Ascending aorta (tissue), 2 donors: ENCODE measurements at regions of chr2 and their contacts with region 1.

Region 1: GRCh38 chr2:118855451-118856279 is 8.2 kb upstream of the EN1 start:
- DNase-seq: peak; percentile 25 to 81
- H3K4me3 ChIP-seq: peak overlapping the region; percentile 39 to 44
- H3K27ac ChIP-seq: no peak overlapping the region
- H3K4me1 ChIP-seq: peaks cover 0 to 17% of the 10 kb centered on the region in 2 donors
- H3K27me3 ChIP-seq: peaks cover 34% of the 10 kb centered on the region
- CTCF ChIP-seq: peak; percentile 81 to 97 (median 84)

Region 2: GRCh38 chr2:118046634-118047210 is 808.9 kb before region 1 on chr2:
- intact Hi-C with region 1: loop called (anchors 2 kb)
- DNase-seq: no peak
- H3K4me3 ChIP-seq: no peak overlapping the region
- H3K27ac ChIP-seq: no peak overlapping the region
- H3K4me1 ChIP-seq: no peaks in the 10 kb centered on the region
- H3K27me3 ChIP-seq: no peaks in the 10 kb centered on the region
- CTCF ChIP-seq: peak in 2 of 3 experiments; percentile 57 to 67

Region 3: GRCh38 chr2:118088051-118089024 is 767.3 kb before region 1 on chr2 and contains the start of gene INSIG2:
- intact Hi-C with region 1: no loop called
- DNase-seq: peak; percentile 77 to 95
- H3K4me3 ChIP-seq: peak within 1 kb of the TSS; percentile 79 to 90
- H3K27ac ChIP-seq: peak within 1 kb of the TSS; percentile 48 to 69
- H3K4me1 ChIP-seq: peaks cover 0 to 23% of the 10 kb centered on the region in 2 donors
- H3K27me3 ChIP-seq: no peaks in the 10 kb centered on the region
- CTCF ChIP-seq: peak in 1 of 3 experiments; percentile 14
- total RNA-seq, gene INSIG2: 64.2 TPM

Region 4: DNA sequence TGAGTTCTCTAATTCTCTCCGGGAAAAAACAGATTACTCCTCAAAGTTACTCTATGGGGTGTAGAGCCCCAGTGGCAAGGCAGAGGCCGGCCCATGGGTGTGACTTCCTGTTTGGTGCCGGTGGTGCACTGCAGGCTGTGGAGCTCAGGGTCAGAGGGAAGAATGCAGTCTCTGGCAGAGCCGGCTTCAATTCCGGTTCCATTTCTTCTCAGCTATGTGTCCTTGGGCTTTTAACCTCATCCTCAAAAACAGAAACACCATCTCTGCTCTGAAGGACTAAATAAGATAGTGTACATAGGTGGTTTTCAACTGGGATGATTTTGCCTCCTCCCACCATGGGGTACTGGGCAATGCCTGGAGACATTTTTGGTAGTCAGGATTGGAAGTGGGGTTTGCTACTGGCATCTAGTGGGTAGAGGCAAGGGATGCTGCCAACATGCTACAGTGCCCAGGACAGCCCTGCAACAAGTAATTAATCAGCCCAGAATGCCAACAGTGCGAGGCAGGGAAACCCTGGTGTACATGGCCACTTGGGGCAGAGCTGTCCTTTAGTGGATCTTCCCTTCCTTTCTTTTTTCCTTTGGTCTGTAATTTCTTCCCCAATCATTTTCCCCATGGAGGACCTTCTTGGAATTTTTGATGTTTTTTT is 686.2 kb before region 1 on chr2:
- intact Hi-C with region 1: no loop called
- DNase-seq: no peak
- H3K4me3 ChIP-seq: no peak overlapping the region
- H3K27ac ChIP-seq: no peak overlapping the region
- H3K4me1 ChIP-seq: no peaks in the 10 kb centered on the region
- H3K27me3 ChIP-seq: no peaks in the 10 kb centered on the region
- CTCF ChIP-seq: no peak

Region 5: DNA sequence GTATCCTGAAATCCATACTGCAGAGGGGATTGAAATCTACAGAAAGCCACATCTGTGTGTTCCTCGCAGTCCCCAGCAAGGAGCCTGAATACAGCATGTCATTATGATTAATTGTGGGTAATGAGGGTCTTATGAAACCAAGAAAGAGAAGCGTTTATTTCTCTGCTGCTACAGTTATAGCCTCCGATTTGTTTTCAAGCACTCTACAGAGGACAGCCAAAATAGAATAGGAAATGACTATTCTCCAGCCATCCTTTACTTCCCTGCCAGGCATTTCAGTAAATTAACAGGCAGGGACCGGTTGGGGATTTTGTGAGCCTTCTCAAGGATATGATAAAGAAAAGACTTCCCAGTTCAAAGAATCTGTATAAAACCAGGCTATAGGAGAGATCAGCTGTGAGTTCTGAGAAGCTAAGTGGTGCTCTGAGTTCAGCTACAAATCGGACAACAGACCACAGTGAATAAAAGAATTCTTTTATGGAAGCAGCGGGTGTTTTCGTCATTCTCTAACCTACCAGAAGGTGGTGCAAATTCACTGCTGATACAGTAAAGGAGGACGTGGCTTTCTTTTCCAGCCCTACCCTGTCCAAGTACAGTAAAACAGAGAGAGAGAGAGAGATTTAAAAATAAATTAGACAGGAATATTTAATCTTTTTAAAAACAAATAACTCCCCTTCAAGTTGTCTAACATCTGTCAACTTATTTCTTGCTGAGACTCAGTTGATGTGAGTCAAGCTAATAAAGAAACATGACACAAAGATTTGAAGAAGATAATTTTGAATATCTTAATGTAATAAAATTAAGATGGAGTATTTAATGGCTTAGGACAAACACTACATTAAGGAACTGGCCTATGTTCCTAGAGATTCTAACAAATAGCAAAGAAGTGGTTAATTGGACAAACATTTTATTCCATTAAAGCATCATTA is 633.7 kb before region 1 on chr2:
- intact Hi-C with region 1: loop called (anchors 5 kb)
- DNase-seq: no peak
- H3K4me3 ChIP-seq: no peak overlapping the region
- H3K27ac ChIP-seq: no peak overlapping the region
- H3K4me1 ChIP-seq: peaks cover 0 to 11% of the 10 kb centered on the region in 2 donors
- H3K27me3 ChIP-seq: peaks cover 24% of the 10 kb centered on the region
- CTCF ChIP-seq: peak in 2 of 3 experiments; percentile 34 to 51

Region 6: DNA sequence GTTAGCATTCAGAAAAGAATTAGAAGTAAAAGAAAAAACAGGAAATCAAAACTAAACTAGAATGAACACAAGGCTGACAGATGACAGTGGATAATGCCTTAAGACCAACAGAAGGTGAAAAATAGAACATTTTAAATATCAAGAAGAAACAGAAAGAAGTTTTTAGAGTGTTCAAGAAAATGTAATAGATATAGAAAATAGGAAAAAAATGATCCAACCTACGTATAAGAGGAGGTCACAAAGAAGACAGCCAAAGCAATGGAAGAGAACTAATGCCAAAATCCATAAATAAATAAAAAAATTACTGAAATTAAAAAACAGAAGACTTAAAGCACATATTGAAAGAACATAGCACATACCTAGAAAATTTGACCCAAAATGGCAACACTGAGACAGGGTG is 34.3 kb after region 1 on chr2:
- intact Hi-C with region 1: no loop called
- DNase-seq: no peak
- H3K4me3 ChIP-seq: no peak overlapping the region
- H3K27ac ChIP-seq: no peak overlapping the region
- H3K4me1 ChIP-seq: no peaks in the 10 kb centered on the region
- H3K27me3 ChIP-seq: no peaks in the 10 kb centered on the region
- CTCF ChIP-seq: no peak

Region 7: DNA sequence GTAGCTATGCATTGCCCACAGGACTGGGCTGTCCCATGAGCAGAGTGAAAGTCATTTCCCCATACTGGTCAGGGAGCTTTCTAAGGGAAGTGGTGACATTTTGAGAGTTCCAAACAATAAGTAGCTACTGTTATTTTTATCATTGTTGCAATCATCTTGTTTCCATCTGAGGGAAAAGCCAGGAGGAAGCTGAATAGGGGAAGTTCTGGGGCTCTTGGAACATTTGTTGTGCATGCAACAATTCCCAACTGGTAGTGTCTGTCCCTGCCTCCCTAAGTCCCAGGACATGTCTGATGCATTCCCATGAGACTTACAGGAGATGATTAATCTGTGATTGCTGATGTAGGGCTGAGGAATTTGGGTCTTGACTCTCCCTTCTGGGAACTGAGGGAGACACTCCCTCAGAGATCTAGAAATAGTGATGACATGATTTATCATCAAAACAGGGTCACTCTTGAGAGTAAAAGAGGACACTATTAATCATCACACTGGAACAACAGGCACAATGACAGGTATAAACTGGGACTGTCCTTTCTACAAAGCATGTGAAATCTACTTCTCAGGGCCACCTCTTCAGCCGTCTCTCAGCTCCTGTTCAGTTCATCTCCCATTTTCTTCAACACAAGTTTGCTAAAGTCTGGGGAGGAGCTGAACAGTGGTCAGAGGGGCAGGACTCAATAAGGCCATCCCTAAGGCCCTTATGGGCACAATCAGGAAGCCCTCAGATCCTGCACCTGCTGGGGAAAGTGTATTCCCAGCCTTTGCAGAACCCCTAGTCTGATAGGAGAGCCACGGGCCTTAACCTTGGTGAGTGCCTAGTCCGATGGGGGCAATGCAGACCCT is 58.4 kb after region 1 on chr2:
- intact Hi-C with region 1: no loop called
- DNase-seq: no peak
- H3K4me3 ChIP-seq: no peak overlapping the region
- H3K27ac ChIP-seq: no peak overlapping the region
- H3K4me1 ChIP-seq: no peaks in the 10 kb centered on the region
- H3K27me3 ChIP-seq: no peaks in the 10 kb centered on the region
- CTCF ChIP-seq: no peak